Ovary (tissue), 10 donors: ENCODE measurements at regions of chr7 and their contacts with region 1.

Region 1: DNA sequence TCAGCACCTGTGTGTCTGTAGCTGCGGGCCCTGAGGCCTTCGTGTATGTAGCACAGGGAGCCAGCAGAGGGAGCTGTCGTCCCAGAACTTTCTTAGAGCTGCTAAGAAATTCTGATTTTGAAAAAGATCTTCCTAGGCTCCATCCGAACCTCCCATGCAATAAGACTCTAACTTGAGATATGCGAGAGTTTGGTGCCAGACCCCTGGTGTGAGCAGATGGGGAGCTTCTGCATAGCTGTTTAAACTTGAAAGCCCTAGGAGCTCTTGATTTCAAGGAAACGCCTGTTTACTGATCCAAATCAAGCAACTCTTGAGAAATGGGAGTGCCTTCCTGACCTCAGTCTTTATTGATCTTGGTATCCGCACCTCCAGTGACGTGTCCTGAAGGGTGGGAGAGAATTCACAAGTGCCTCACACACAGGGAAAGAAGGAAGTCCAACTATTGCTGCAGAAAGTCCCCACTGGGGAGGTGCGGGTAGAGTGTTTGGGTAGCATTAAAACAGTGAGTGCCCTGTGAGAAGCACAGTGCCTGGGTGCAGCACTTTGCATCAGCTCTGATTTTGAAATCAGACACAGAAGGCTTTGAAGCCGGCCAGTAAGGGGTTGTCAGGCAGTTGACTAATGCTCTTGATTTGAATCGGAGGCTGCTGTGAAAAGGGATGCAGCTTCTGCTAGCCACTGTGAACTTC is 66.4 kb upstream of the STRIP2 start:
- DNase-seq: peak; percentile 61 to 81 (median 75)
- H3K4me3 ChIP-seq: peak overlapping the region; percentile 11
- H3K27ac ChIP-seq: no peak overlapping the region
- H3K4me1 ChIP-seq: no peaks in the 10 kb centered on the region
- H3K27me3 ChIP-seq: no peaks in the 10 kb centered on the region
- CTCF ChIP-seq: peak; percentile 40 to 60 (median 51)
- EP300 ChIP-seq: no peak
- POLR2A ChIP-seq: no peak

Region 2: GRCh38 chr7:128904381-128905197 is 463.3 kb before region 1 on chr7:
- intact Hi-C with region 1: no loop called
- DNase-seq: no peak
- H3K4me3 ChIP-seq: no peak overlapping the region
- H3K27ac ChIP-seq: no peak overlapping the region
- H3K4me1 ChIP-seq: no peaks in the 10 kb centered on the region
- H3K27me3 ChIP-seq: no peaks in the 10 kb centered on the region
- CTCF ChIP-seq: peak in 1 of 3 donors; percentile 11
- EP300 ChIP-seq: no peak
- POLR2A ChIP-seq: no peak

Region 3: DNA sequence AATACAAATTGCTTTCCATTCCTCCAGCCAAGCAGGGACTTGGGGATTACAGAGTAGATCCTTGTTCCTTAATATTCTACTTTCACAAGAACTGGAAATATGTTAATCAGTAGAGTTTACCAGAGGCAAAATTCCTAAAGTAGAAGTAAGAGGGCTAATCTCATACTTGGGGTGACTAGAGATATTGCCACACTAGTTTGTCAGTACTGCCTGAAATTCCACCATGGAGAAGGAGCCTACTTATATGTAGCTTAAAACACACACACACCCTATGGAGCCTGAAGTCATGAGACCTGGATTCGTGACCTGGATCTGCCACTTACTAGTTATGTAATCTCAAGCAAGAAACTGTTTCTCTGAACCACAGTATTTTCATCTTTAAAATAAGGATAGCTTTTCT is 100.2 kb after region 1 on chr7:
- intact Hi-C with region 1: loop called in 3 of 4 experiments (anchors 5 to 10 kb)
- DNase-seq: no peak
- H3K4me3 ChIP-seq: no peak overlapping the region
- H3K27ac ChIP-seq: no peak overlapping the region
- H3K4me1 ChIP-seq: no peaks in the 10 kb centered on the region
- H3K27me3 ChIP-seq: no peaks in the 10 kb centered on the region
- CTCF ChIP-seq: no peak
- EP300 ChIP-seq: no peak
- POLR2A ChIP-seq: no peak

Region 4: GRCh38 chr7:129574487-129574886 is 206.6 kb after region 1 on chr7:
- intact Hi-C with region 1: no loop called
- DNase-seq: no peak
- H3K4me3 ChIP-seq: no peak overlapping the region
- H3K27ac ChIP-seq: no peak overlapping the region
- H3K4me1 ChIP-seq: no peaks in the 10 kb centered on the region
- H3K27me3 ChIP-seq: no peaks in the 10 kb centered on the region
- CTCF ChIP-seq: no peak
- EP300 ChIP-seq: no peak
- POLR2A ChIP-seq: no peak

Region 5: GRCh38 chr7:129644634-129645230 is 276.9 kb after region 1 on chr7:
- intact Hi-C with region 1: loop called in 1 of 4 experiments (anchors 10 kb)
- DNase-seq: no peak
- H3K4me3 ChIP-seq: no peak overlapping the region
- H3K27ac ChIP-seq: no peak overlapping the region
- H3K4me1 ChIP-seq: peaks cover 4% of the 10 kb centered on the region
- H3K27me3 ChIP-seq: no peaks in the 10 kb centered on the region
- CTCF ChIP-seq: peak in 2 of 3 donors; percentile 17 to 18
- EP300 ChIP-seq: no peak
- POLR2A ChIP-seq: no peak

Region 6: DNA sequence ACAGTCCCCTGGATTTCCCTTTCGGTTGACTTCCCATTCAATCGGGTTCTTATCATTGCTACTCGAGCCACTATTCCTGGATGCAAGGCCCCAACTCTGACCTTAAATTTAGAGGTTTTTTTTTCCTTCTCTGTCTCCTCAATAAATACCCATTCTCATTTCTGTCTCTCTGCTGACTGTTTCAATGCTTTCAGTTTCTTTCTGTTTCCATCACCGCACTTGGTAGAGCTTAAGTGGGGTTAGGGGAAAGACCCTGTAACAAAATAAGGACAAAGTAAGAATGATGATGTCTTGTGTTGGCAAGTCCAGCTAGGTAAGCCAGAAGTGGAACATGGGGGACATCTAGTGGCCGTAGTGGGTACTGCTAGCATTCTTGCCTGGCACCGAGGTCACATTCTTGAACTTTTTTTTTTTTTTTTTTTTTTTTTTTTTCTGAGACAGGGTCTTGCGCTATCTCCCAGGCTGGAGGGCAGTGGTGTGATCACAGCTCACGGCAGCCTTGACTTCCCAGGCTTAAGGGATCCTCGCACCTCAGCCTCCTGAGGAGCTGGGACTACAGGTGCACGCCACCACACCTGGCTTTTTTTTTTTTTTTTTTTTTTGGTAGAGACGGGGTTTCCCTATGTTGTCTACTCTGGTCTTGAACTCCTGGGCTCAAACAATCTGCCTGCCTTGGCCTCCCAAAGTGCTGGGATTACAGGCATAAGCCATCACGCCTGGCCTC is 643.0 kb after region 1 on chr7:
- intact Hi-C with region 1: loop called in 1 of 4 experiments (anchors 10 kb)
- DNase-seq: peak; percentile 73 to 89 (median 88)
- H3K4me3 ChIP-seq: no peak overlapping the region
- H3K27ac ChIP-seq: no peak overlapping the region
- H3K4me1 ChIP-seq: peaks cover 1% of the 10 kb centered on the region
- H3K27me3 ChIP-seq: no peaks in the 10 kb centered on the region
- CTCF ChIP-seq: peak; percentile 69 to 91 (median 78)
- EP300 ChIP-seq: no peak
- POLR2A ChIP-seq: no peak